Activated CD4-positive, alpha-beta memory T cell treated with anti-CD3 and anti-CD28 coated beads for 36 hours (primary cell): ENCODE measurements at regions of chr2 and their contacts with region 1.

Region 1: GRCh38 chr2:157443795-157444640 is at the start of gene CYTIP:
- DNase-seq: peak; percentile 82
- H3K4me3 Mint-ChIP-seq: peak within 1 kb of the TSS; percentile 92
- H3K27ac Mint-ChIP-seq: peak within 1 kb of the TSS; percentile 99
- H3K4me1 Mint-ChIP-seq: peaks cover 37% of the 10 kb centered on the region
- H3K27me3 Mint-ChIP-seq: peaks cover 2% of the 10 kb centered on the region
- total RNA-seq, gene CYTIP: 369 to 388 TPM

Region 2: GRCh38 chr2:157404363-157404762 is 39.7 kb before region 1 on chr2:
- CTCF ChIA-PET with region 1: interaction called, 3 read pairs
- POLR2A ChIA-PET with region 1: interaction called, 13 read pairs
- intact Hi-C with region 1: loop called (anchors 1 kb)
- DNase-seq: peak; percentile 73
- H3K4me3 Mint-ChIP-seq: no peak overlapping the region
- H3K27ac Mint-ChIP-seq: peak overlapping the region; percentile 78
- H3K4me1 Mint-ChIP-seq: peaks cover 68% of the 10 kb centered on the region
- H3K27me3 Mint-ChIP-seq: no peaks in the 10 kb centered on the region

Region 3: GRCh38 chr2:157420771-157421323 is 23.2 kb before region 1 on chr2:
- CTCF ChIA-PET with region 1: interaction called, 6 read pairs
- POLR2A ChIA-PET with region 1: interaction called, 319 read pairs
- intact Hi-C with region 1: loop called (anchors 1 kb)
- DNase-seq: peak; percentile 61
- H3K4me3 Mint-ChIP-seq: peak overlapping the region; percentile 38
- H3K27ac Mint-ChIP-seq: peak overlapping the region; percentile 97
- H3K4me1 Mint-ChIP-seq: peaks cover 74% of the 10 kb centered on the region
- H3K27me3 Mint-ChIP-seq: no peaks in the 10 kb centered on the region

Region 4: GRCh38 chr2:157460384-157460837 is 16.4 kb after region 1 on chr2:
- CTCF ChIA-PET with region 1: interaction called, 9 read pairs
- POLR2A ChIA-PET with region 1: interaction called, 201 read pairs
- intact Hi-C with region 1: loop called (anchors 1 kb)
- DNase-seq: no peak
- H3K4me3 Mint-ChIP-seq: peak overlapping the region; percentile 1
- H3K27ac Mint-ChIP-seq: peak overlapping the region; percentile 35
- H3K4me1 Mint-ChIP-seq: peaks cover 84% of the 10 kb centered on the region
- H3K27me3 Mint-ChIP-seq: no peaks in the 10 kb centered on the region

Region 5: GRCh38 chr2:157492189-157492773 is 48.3 kb after region 1 on chr2:
- CTCF ChIA-PET with region 1: interaction called, 12 read pairs
- POLR2A ChIA-PET with region 1: interaction called, 8 read pairs
- intact Hi-C with region 1: no loop called
- DNase-seq: peak; percentile 83
- H3K4me3 Mint-ChIP-seq: no peak overlapping the region
- H3K27ac Mint-ChIP-seq: no peak overlapping the region
- H3K4me1 Mint-ChIP-seq: peaks cover 55% of the 10 kb centered on the region
- H3K27me3 Mint-ChIP-seq: no peaks in the 10 kb centered on the region

Region 6: GRCh38 chr2:157572725-157573124 is 128.7 kb after region 1 on chr2:
- CTCF ChIA-PET with region 1: no interaction called
- POLR2A ChIA-PET with region 1: no interaction called
- intact Hi-C with region 1: no loop called
- DNase-seq: no peak
- H3K4me3 Mint-ChIP-seq: no peak overlapping the region
- H3K27ac Mint-ChIP-seq: no peak overlapping the region
- H3K4me1 Mint-ChIP-seq: no peaks in the 10 kb centered on the region
- H3K27me3 Mint-ChIP-seq: no peaks in the 10 kb centered on the region